Activated CD4-positive, alpha-beta memory T cell treated with anti-CD3 and anti-CD28 coated beads for 36 hours (primary cell): ENCODE measurements at regions of chr1 and their contacts with region 1.

Region 1: DNA sequence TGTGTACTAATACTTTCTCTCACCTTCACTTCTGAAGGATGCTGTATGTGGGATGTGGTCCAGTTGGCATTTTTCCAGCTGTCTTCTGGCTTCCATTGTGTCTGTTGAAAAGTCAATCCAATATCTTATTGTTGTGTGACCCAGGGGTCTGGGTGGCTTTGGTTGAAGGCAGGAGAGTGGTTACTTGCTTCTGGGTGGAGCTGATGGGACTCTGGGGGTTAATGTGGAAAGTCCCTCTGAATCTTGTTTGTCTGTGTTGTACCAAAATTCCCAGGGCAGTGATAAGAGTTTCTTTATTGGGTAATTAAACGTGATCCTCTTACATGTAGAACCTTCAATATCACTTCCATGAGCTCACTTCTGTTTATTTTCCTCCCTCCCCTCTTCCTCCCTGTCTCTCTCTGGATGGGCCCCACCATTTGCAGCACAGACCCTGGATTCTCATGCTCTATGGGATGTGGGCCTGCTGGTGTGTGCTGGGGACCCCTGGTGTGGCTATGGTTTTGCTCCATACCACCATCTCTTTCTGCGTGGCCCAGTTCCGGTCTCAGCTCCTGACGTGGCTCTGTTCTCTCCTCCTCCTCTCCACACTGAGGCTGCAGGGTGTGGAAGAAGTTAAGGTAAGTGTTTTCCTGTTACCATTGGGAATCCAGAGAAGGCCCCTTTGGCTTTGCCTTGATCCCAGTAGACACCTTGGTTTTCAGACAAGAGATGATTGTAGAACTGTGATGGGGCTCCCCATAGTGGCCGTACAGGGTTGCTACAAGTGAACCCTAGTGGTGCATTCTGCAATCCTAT is 71.5 kb downstream of the HHAT start:
- DNase-seq: peak; percentile 71
- H3K4me3 Mint-ChIP-seq: peak overlapping the region; percentile 55
- H3K27ac Mint-ChIP-seq: peak overlapping the region; percentile 68
- H3K4me1 Mint-ChIP-seq: peaks cover 43% of the 10 kb centered on the region
- H3K27me3 Mint-ChIP-seq: no peaks in the 10 kb centered on the region

Region 2: GRCh38 chr1:210143465-210144062 is 256.7 kb before region 1 on chr1:
- CTCF ChIA-PET with region 1: interaction called, 22 read pairs
- POLR2A ChIA-PET with region 1: no interaction called
- intact Hi-C with region 1: loop called (anchors 1 kb)
- DNase-seq: peak; percentile 66
- H3K4me3 Mint-ChIP-seq: no peak overlapping the region
- H3K27ac Mint-ChIP-seq: no peak overlapping the region
- H3K4me1 Mint-ChIP-seq: no peaks in the 10 kb centered on the region
- H3K27me3 Mint-ChIP-seq: peaks cover 12% of the 10 kb centered on the region

Region 3: DNA sequence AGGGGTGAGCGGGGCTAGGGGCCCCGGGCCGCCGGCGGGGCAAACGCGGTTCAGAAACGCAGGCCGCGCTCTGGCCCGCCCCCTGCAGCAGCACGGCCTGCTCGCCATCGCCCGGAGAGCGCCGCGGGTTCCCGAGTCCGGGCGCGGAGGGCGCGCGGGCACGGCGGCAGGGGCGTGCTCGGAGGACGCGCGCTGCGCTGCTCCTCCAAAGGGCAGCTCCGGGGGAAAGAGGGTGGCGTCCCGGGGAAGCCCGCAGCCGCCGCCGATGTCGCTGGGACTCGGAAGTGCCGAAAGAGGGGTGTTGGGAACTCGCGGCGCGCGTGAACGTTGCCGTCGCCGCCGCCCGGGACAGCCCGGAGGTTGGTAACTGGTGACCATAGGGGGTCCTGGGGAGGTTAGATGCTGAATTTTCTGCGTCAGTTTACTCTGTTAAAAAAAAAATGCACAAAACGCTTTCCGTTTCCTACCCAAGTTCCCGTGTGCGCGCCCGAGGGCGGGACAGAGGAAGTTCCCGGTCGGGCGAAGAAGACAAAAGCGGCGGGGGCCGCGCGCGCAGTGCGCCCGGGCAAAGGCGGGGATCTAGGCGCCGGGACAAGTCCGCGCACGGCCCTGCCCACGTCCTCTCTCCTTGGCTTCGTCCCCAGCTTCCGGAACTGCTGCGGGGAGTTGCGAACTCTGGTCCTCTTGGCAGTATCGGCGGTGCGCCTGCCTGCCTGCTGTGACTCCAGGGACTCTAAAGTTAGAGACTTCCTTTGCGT is 71.3 kb before region 1 on chr1 and contains the start of gene HHAT:
- CTCF ChIA-PET with region 1: interaction called, 19 read pairs
- POLR2A ChIA-PET with region 1: interaction called, 19 read pairs
- intact Hi-C with region 1: loop called (anchors 1 kb)
- DNase-seq: peak; percentile 76
- H3K4me3 Mint-ChIP-seq: peak within 1 kb of the TSS; percentile 89
- H3K27ac Mint-ChIP-seq: peak within 1 kb of the TSS; percentile 91
- H3K4me1 Mint-ChIP-seq: peaks cover 42% of the 10 kb centered on the region
- H3K27me3 Mint-ChIP-seq: peaks cover 5% of the 10 kb centered on the region
- total RNA-seq, gene HHAT: 1.6 to 1.8 TPM

Region 4: GRCh38 chr1:210360852-210361477 is 39.3 kb before region 1 on chr1:
- CTCF ChIA-PET with region 1: interaction called, 57 read pairs
- POLR2A ChIA-PET with region 1: no interaction called
- intact Hi-C with region 1: loop called (anchors 1 kb)
- DNase-seq: no peak
- H3K4me3 Mint-ChIP-seq: no peak overlapping the region
- H3K27ac Mint-ChIP-seq: no peak overlapping the region
- H3K4me1 Mint-ChIP-seq: peaks cover 10% of the 10 kb centered on the region
- H3K27me3 Mint-ChIP-seq: no peaks in the 10 kb centered on the region

Region 5: GRCh38 chr1:210464519-210465039 is 64.3 kb after region 1 on chr1:
- CTCF ChIA-PET with region 1: no interaction called
- POLR2A ChIA-PET with region 1: interaction called, 3 read pairs
- intact Hi-C with region 1: loop called (anchors 2 kb)
- DNase-seq: peak; percentile 44
- H3K4me3 Mint-ChIP-seq: no peak overlapping the region
- H3K27ac Mint-ChIP-seq: no peak overlapping the region
- H3K4me1 Mint-ChIP-seq: peaks cover 24% of the 10 kb centered on the region
- H3K27me3 Mint-ChIP-seq: peaks cover 2% of the 10 kb centered on the region